Activated B cell treated with CpG ODN at 0.5 μM for 24 hours (primary cell): ENCODE measurements at regions of chrX and their contacts with region 1.

Region 1: DNA sequence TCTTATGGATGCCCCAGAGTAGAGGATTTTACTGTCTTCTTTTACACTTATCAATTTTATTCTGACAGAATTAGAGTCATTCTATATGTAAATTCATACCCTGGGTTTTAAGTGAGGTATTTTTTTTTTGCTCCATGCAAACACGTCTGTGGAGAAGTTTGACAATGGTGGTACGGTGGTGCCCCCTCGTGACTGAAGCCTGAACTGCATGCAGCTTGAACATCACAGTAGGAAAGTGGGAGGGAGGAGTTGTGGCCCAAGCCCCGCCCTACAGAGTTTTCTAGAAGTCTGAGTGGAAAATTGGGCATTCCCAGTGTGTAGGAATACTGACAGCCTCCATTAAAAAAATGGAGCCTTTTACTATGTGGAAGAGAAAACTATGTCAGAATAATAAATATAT is 73.3 kb upstream of the RAB40AL start:
- DNase-seq: peak; percentile 63
- ATAC-seq: peak; percentile 100
- H3K4me3 Mint-ChIP-seq: no peak overlapping the region
- H3K27ac Mint-ChIP-seq: no peak overlapping the region
- H3K4me1 Mint-ChIP-seq: no peaks in the 10 kb centered on the region
- H3K27me3 Mint-ChIP-seq: no peaks in the 10 kb centered on the region
- CTCF ChIP-seq: no peak

Region 2: DNA sequence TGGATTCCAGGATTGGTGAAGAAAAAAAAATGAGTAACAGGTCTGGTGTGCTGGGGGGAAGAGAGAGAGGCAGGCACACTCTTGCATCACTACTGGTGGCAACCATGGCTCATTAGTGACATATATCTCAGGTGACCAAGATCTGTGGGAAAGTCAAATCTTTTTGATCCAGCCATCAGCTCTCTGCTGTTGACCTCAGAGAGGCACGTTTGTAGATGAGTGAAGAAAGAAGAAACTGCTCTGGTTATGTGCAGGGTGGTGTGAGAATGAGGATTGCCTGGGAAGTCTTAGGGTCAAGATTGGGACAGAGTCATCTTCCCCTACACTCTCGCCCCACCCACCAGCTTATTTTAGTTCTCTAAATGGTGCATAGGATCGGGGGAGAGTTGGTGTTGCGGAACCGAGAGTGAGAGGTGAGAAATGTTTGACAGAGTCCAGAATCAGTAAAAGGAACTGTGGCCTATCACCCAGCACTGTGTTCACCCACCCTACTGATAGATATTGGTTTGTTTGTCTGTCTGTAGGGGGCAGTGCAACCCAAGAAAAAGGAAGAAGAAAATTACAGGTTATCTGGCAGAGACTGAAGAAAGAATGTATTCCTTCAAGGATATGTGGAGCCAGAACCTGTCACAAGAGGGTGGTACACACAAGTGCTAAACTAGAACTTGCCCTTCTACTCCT is 1267.9 kb before region 1 on chrX:
- CTCF ChIA-PET with region 1: no interaction called
- POLR2A ChIA-PET with region 1: no interaction called
- intact Hi-C with region 1: loop called (anchors 5 kb)
- DNase-seq: no peak
- ATAC-seq: peak; percentile 94
- H3K4me3 Mint-ChIP-seq: no peak overlapping the region
- H3K27ac Mint-ChIP-seq: peak overlapping the region; percentile 46
- H3K4me1 Mint-ChIP-seq: peaks cover 6% of the 10 kb centered on the region
- H3K27me3 Mint-ChIP-seq: peaks cover 6% of the 10 kb centered on the region
- CTCF ChIP-seq: no peak

Region 3: GRCh38 chrX:102067966-102068708 is 795.6 kb before region 1 on chrX:
- CTCF ChIA-PET with region 1: interaction called, 6 read pairs
- POLR2A ChIA-PET with region 1: no interaction called
- intact Hi-C with region 1: loop called (anchors 1 kb)
- DNase-seq: no peak
- ATAC-seq: no peak
- H3K4me3 Mint-ChIP-seq: no peak overlapping the region
- H3K27ac Mint-ChIP-seq: no peak overlapping the region
- H3K4me1 Mint-ChIP-seq: no peaks in the 10 kb centered on the region
- H3K27me3 Mint-ChIP-seq: peaks cover 3% of the 10 kb centered on the region
- CTCF ChIP-seq: no peak

Region 4: GRCh38 chrX:102129473-102129872 is 734.3 kb before region 1 on chrX:
- CTCF ChIA-PET with region 1: no interaction called
- POLR2A ChIA-PET with region 1: no interaction called
- intact Hi-C with region 1: loop called (anchors 1 kb)
- DNase-seq: no peak
- ATAC-seq: no peak
- H3K4me3 Mint-ChIP-seq: no peak overlapping the region
- H3K27ac Mint-ChIP-seq: no peak overlapping the region
- H3K4me1 Mint-ChIP-seq: peaks cover 4% of the 10 kb centered on the region
- H3K27me3 Mint-ChIP-seq: peaks cover 16% of the 10 kb centered on the region
- CTCF ChIP-seq: no peak

Region 5: GRCh38 chrX:102339312-102340298 is 524.1 kb before region 1 on chrX:
- CTCF ChIA-PET with region 1: no interaction called
- POLR2A ChIA-PET with region 1: no interaction called
- intact Hi-C with region 1: no loop called
- DNase-seq: no peak
- ATAC-seq: no peak
- H3K4me3 Mint-ChIP-seq: no peak overlapping the region
- H3K27ac Mint-ChIP-seq: no peak overlapping the region
- H3K4me1 Mint-ChIP-seq: no peaks in the 10 kb centered on the region
- H3K27me3 Mint-ChIP-seq: no peaks in the 10 kb centered on the region
- CTCF ChIP-seq: no peak

Region 6: DNA sequence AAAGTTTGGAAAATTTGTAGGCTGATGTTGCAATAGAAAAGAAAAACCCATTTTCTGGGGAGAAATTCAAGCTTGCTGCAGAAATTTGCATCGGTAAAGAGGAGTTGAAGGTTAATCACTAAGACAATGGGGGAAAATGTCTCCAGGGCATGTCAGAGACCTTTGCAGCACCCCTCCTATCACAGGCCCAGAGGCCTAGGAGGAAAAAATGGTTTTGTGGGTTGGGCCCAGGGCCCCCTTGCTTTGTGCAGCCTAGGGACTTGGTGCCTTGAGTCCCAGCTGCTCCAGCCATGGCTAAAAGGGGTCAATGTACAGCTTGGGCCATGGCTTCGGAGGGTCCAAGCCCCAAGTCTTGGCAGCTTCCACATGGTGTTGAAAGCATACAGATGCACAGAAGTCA is 365.0 kb before region 1 on chrX:
- CTCF ChIA-PET with region 1: no interaction called
- POLR2A ChIA-PET with region 1: no interaction called
- intact Hi-C with region 1: loop called (anchors 10 kb)
- DNase-seq: no peak
- ATAC-seq: no peak
- H3K4me3 Mint-ChIP-seq: no peak overlapping the region
- H3K27ac Mint-ChIP-seq: no peak overlapping the region
- H3K4me1 Mint-ChIP-seq: no peaks in the 10 kb centered on the region
- H3K27me3 Mint-ChIP-seq: peaks cover 6% of the 10 kb centered on the region
- CTCF ChIP-seq: no peak

Region 7: DNA sequence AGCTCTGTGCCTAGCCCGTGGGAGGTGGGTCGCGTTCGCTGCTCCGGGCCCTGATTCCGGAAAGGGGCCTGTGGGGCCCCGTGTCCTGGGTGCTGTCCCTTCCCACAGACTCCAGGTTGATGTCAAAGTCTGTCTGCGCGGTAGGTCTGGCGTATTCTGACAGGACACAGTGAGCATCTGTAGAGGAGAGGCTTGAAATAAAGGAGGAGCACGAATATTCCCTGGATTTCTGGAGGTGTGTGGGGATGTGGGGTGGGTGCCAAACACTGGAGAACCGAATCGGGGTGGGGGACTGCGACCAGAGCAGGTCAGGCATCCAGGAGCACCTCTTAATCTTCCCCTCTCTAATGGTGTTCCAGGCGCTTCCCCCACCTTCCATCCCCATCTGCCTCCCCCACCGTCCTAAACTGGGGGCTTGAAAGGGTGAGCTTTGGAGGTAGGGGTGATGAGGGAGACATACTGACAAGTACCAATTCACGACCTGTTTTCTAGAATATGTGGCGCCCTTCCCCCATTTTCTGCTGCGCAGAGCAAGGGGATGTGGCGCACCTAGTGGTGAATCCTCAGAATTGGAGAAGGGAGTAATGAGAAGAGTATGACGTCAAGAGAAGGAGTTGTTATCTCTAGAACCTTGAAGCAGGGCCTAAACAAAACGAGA is 211.6 kb before region 1 on chrX:
- CTCF ChIA-PET with region 1: no interaction called
- POLR2A ChIA-PET with region 1: no interaction called
- intact Hi-C with region 1: loop called (anchors 5 kb)
- DNase-seq: no peak
- ATAC-seq: peak; percentile 63
- H3K4me3 Mint-ChIP-seq: peak overlapping the region; percentile 95
- H3K27ac Mint-ChIP-seq: peak overlapping the region; percentile 68
- H3K4me1 Mint-ChIP-seq: peaks cover 15% of the 10 kb centered on the region
- H3K27me3 Mint-ChIP-seq: no peaks in the 10 kb centered on the region
- CTCF ChIP-seq: no peak

Region 8: GRCh38 chrX:103063918-103064434 is 200.2 kb after region 1 on chrX and contains the start of gene BEX1:
- CTCF ChIA-PET with region 1: no interaction called
- POLR2A ChIA-PET with region 1: no interaction called
- intact Hi-C with region 1: no loop called
- DNase-seq: no peak
- ATAC-seq: no peak
- H3K4me3 Mint-ChIP-seq: no peak within 1 kb of the TSS
- H3K27ac Mint-ChIP-seq: no peak within 1 kb of the TSS
- H3K4me1 Mint-ChIP-seq: no peaks in the 10 kb centered on the region
- H3K27me3 Mint-ChIP-seq: peaks cover 11% of the 10 kb centered on the region
- CTCF ChIP-seq: no peak
- total RNA-seq, gene BEX1: 0.84 TPM in 1 of 2 replicates, not detected in the other

Region 9: GRCh38 chrX:104205548-104205947 is 1341.8 kb after region 1 on chrX:
- CTCF ChIA-PET with region 1: no interaction called
- POLR2A ChIA-PET with region 1: no interaction called
- intact Hi-C with region 1: no loop called
- DNase-seq: no peak
- ATAC-seq: no peak
- H3K4me3 Mint-ChIP-seq: no peak overlapping the region
- H3K27ac Mint-ChIP-seq: no peak overlapping the region
- H3K4me1 Mint-ChIP-seq: no peaks in the 10 kb centered on the region
- H3K27me3 Mint-ChIP-seq: no peaks in the 10 kb centered on the region
- CTCF ChIP-seq: no peak